ENCODE measurements at regions of chr2 and their contacts with region 1.

Region 1: GRCh38 chr2:203814661-203815540 is 52.7 kb upstream of the CTLA4 start:
- DNase-seq: peak in 1 of 2 experiments; percentile 3
- H3K4me3 ChIP-seq: no peak overlapping the region
- H3K27ac ChIP-seq: no peak overlapping the region
- H3K4me1 ChIP-seq: peaks cover 16% of the 10 kb centered on the region
- H3K27me3 ChIP-seq: no peaks in the 10 kb centered on the region
- CTCF ChIP-seq: peak; percentile 68

Region 2: DNA sequence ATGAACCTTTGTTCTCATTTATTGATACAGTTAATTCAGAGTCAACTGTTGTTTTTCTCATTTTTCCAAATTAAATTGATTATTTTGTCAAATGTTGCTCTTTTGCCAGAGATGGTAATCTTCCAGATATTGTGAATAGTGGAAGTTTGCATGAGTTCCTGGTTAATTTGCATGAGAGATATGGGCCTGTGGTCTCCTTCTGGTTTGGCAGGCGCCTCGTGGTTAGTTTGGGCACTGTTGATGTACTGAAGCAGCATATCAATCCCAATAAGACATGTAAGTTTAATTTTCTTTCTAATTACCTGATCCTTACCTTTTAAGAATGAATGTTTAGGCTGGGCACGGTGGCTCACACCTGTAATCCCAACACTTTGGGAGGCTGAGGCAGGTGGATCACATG is 568.3 kb before region 1 on chr2:
- CTCF ChIA-PET with region 1: no interaction called
- POLR2A ChIA-PET with region 1: no interaction called
- intact Hi-C with region 1: no loop called
- DNase-seq: no peak
- H3K4me3 ChIP-seq: no peak overlapping the region
- H3K27ac ChIP-seq: no peak overlapping the region
- H3K4me1 ChIP-seq: no peaks in the 10 kb centered on the region
- H3K27me3 ChIP-seq: no peaks in the 10 kb centered on the region
- CTCF ChIP-seq: no peak

Region 3: DNA sequence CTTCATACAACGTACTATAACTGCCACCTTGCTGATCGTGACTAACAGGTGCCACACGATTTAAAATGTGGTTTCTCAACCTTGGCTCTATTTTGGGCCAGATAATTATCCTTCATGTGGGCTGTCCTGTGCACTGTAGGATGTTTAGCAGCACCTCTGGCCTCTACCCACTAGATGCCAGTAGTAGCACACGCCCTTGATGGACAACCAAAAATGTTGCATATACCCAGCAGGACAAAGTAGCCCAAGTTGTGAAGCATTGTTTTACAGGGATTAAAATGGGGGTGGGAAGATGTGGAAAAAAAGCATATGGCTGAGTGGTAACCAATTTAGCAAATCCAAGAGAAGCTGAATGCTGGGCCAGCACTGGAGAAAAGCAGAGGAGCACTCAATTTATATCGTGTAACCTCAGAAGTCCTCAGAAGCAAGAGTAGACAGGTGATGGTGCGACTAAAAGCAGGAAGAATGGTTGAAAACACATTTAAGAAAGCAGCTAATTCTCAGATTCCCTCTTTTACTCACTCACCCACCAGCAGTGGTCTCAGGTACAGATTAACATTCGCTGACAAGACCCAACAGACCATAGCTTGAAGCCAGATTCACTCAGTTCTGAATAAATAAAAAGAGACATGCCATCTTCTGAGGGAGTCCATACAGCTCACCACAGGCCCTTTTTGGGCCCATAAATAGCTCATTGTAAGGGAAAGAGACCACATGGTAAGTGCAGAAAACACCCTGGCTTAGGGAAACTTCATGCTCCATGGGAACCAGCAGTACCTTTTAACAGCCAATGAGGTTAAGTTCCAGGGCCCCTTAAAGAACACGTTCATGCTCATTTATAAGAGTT is 330.4 kb before region 1 on chr2:
- CTCF ChIA-PET with region 1: no interaction called
- POLR2A ChIA-PET with region 1: no interaction called
- intact Hi-C with region 1: loop called (anchors 1 kb)
- DNase-seq: peak in 1 of 2 experiments; percentile 19
- H3K4me3 ChIP-seq: no peak overlapping the region
- H3K27ac ChIP-seq: no peak overlapping the region
- H3K4me1 ChIP-seq: no peaks in the 10 kb centered on the region
- H3K27me3 ChIP-seq: no peaks in the 10 kb centered on the region
- CTCF ChIP-seq: peak; percentile 64

Region 4: DNA sequence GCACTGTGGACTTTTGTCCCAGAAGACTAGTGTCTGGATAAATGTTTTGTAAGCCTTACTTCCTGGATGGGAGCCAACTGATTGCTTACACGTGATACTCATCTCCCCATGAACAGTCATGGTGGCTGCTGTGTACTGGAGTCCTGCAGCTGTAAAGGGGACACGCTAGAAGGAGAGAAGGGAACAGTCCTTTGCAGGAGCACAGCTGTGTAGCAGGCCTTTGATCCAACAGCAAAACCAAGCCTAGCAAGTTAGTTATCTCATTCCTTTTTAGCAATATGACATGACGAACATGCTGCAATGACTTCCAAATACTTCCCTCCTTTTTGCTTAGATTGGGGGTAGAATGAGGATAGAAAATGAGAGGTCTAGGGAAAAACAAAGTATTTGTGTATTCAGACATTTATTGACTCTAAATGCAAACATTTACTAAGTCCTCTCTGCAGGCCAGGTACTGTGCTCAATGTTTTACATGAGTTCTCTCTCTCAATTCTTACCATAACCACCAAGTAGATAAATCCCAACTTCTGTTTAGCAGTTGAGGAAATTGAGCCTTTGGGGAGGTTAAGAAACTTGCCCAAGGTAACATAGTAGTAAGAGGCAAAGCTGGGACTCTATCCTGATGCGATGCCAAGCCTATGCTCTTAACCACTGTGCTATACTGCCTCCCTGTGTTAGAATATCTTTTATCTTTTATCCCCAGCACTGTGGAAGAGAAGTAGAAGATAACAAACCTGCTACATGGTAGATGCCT is 163.9 kb before region 1 on chr2:
- CTCF ChIA-PET with region 1: no interaction called
- POLR2A ChIA-PET with region 1: no interaction called
- intact Hi-C with region 1: loop called (anchors 1 kb)
- DNase-seq: no peak
- H3K4me3 ChIP-seq: no peak overlapping the region
- H3K27ac ChIP-seq: no peak overlapping the region
- H3K4me1 ChIP-seq: peaks cover 42% of the 10 kb centered on the region
- H3K27me3 ChIP-seq: no peaks in the 10 kb centered on the region
- CTCF ChIP-seq: peak; percentile 60

Region 5: DNA sequence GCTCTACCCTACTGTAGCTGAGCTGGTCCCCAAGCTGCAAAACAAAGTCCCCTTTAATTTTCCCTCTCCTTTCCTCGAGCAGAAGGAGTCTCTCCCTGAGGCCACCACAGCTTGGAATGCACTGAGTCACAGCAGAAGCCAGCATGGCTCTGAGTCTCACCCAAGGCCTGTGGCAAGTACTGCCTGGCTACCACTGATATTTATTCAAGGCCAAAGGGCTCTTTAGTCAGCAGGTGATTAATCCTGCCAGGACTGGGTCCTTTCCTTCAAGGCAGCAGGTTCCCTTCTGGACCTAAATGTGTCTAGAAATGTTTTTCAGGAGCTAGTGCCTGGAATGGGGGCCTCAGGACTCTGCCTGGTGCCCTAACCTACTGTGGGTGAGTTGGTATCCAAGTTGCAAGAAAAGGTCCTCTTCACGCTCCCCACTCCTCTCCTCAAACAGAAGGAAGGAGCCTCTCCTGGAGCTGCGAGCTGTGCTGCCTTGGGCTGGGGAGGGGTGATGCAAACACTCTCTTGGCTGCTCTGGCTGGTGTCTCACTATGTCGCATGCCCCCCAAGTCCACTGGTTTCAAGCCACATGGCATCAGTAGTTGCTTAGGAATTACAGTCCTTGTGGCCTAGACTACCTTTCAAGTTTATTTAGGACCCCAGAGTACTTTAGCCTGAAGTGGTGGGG is 55.1 kb before region 1 on chr2:
- CTCF ChIA-PET with region 1: no interaction called
- POLR2A ChIA-PET with region 1: interaction called, 4 read pairs
- intact Hi-C with region 1: loop called (anchors 1 kb)
- DNase-seq: peak; percentile 74 to 95
- H3K4me3 ChIP-seq: peak overlapping the region; percentile 27; the same call in 1 of the 2 replicates
- H3K27ac ChIP-seq: peak overlapping the region; percentile 93
- H3K4me1 ChIP-seq: peaks cover 40% of the 10 kb centered on the region
- H3K27me3 ChIP-seq: no peaks in the 10 kb centered on the region
- CTCF ChIP-seq: no peak